ENCODE measurements at regions of chr3 and their contacts with region 1.

Region 1: GRCh38 chr3:170869645-170870593 is at the start of gene RPL22L1:
- DNase-seq: peak; percentile 86 to 97 (median 89)
- ATAC-seq: peak; percentile 93
- H3K4me3 ChIP-seq: peak within 1 kb of the TSS; percentile 84
- H3K4me3 Mint-ChIP-seq: peak within 1 kb of the TSS; percentile 93
- H3K27ac ChIP-seq: peak within 1 kb of the TSS; percentile 68 to 94
- H3K27ac Mint-ChIP-seq: peak within 1 kb of the TSS; percentile 93
- H3K4me1 ChIP-seq: peaks cover 25% of the 10 kb centered on the region
- H3K4me1 Mint-ChIP-seq: peaks cover 32% of the 10 kb centered on the region
- H3K27me3 ChIP-seq: no peaks in the 10 kb centered on the region
- H3K27me3 Mint-ChIP-seq: no peaks in the 10 kb centered on the region
- CTCF ChIP-seq: peak; percentile 12
- total RNA-seq, gene RPL22L1: 53.5 to 55.6 TPM

Region 2: DNA sequence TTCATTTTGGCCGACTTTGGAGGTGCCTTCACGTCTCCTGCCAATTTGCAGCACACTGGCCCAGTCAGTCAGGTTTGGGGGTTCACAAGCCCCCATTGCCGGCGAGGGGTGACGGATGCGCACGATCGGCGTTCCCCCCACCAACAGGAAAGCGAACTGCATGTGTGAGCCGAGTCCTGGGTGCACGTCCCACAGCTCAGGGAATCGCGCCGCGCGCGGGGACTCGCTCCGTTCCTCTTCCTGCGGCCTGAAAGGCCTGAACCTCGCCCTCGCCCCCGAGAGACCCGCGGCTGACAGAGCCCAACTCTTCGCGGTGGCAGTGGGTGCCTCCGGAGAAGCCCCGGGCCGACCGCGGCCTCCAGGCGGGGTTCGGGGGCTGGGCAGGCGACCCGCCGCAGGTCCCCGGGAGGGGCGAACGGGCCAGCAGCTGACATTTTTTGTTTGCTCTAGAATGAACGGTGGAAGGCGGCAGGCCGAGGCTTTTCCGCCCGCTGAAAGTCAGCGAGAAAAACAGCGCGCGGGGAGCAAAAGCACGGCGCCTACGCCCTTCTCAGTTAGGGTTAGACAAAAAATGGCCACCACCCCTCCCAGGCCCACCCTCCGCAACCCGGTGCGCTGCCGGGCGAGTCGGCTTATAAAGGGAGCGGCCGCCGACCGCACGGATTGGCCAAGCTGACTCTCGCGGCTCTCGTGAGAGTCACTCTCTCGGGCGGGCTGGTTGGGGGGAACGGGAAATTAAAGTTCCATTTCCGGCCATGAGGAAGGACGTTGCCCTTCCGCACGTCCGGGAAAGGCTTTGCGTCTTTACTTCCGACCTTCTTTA is 1105.3 kb before region 1 on chr3 and contains the start of gene TERC:
- CTCF ChIA-PET with region 1: no interaction called
- POLR2A ChIA-PET with region 1: interaction called, 6 read pairs
- intact Hi-C with region 1: loop called in 1 of 2 experiments (anchors 5 kb)
- DNase-seq: peak; percentile 82 to 98 (median 92)
- ATAC-seq: peak; percentile 82
- H3K4me3 ChIP-seq: peak within 1 kb of the TSS; percentile 93
- H3K4me3 Mint-ChIP-seq: peak within 1 kb of the TSS; percentile 98
- H3K27ac ChIP-seq: peak within 1 kb of the TSS; percentile 95 to 96
- H3K27ac Mint-ChIP-seq: peak within 1 kb of the TSS; percentile 97
- H3K4me1 ChIP-seq: peaks cover 27% of the 10 kb centered on the region
- H3K4me1 Mint-ChIP-seq: peaks cover 38% of the 10 kb centered on the region
- H3K27me3 ChIP-seq: no peaks in the 10 kb centered on the region
- H3K27me3 Mint-ChIP-seq: no peaks in the 10 kb centered on the region
- CTCF ChIP-seq: no peak
- total RNA-seq, gene TERC: 9.0 to 10.4 TPM

Region 3: DNA sequence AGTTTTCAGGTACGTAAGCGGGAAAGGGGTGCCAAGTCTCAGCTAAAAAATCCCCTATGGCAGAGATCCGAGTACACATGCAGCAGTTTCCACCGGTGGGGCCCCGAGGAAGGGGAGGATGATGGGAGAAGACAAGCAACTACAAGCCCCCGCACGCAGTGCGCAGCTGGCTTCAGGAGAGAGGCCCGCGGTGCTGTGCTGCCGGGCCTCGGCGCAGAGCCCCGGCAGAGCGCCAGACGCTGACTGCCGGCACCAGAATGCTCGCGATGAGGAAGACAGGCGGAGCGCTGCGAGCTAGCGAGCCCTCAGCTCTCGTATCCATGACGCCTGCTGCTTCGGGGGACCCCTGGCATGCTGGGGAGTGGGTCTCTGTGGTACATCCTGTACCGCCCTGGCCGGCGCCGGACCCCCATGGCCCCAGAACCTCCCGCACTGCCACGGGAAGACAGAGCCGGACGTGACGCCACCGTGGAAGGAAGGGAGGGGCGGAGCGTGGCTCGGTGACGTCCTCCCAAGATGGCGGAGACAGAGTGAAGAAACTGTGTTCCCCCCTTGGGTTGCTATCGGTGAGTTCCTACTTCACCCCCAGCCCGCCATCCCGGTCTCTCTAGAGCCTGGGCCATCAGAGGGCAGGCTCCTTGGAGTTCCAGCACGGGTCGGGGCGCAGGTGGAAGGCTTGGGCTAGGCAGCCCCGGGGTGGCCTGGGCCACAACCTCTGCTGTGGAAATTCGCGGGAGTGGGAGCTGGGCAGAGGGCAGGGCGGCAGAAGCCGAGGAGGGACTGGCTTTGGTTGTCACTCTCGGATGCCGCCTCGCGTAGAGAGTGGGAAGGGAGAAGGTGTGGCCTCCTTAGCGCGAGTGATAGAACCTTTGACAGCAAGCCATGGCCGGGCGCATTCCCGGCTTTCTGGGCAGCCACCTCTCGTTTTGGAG is 1096.8 kb before region 1 on chr3 and contains the start of gene MYNN:
- CTCF ChIA-PET with region 1: no interaction called
- POLR2A ChIA-PET with region 1: interaction called, 15 read pairs
- intact Hi-C with region 1: loop called in 1 of 2 experiments (anchors 5 kb)
- DNase-seq: peak; percentile 81 to 96 (median 89)
- ATAC-seq: peak; percentile 80
- H3K4me3 ChIP-seq: peak within 1 kb of the TSS; percentile 83
- H3K4me3 Mint-ChIP-seq: peak within 1 kb of the TSS; percentile 98
- H3K27ac ChIP-seq: peak within 1 kb of the TSS; percentile 98 to 100
- H3K27ac Mint-ChIP-seq: peak within 1 kb of the TSS; percentile 100
- H3K4me1 ChIP-seq: peaks cover 22% of the 10 kb centered on the region
- H3K4me1 Mint-ChIP-seq: peaks cover 69% of the 10 kb centered on the region
- H3K27me3 ChIP-seq: no peaks in the 10 kb centered on the region
- H3K27me3 Mint-ChIP-seq: peaks cover 12% of the 10 kb centered on the region
- CTCF ChIP-seq: no peak
- total RNA-seq, gene MYNN: 18.7 to 20.6 TPM

Region 4: GRCh38 chr3:170563712-170564423 is 306.1 kb before region 1 on chr3:
- CTCF ChIA-PET with region 1: no interaction called
- POLR2A ChIA-PET with region 1: no interaction called
- intact Hi-C with region 1: no loop called
- DNase-seq: no peak
- ATAC-seq: no peak
- H3K4me3 ChIP-seq: no peak overlapping the region
- H3K4me3 Mint-ChIP-seq: no peak overlapping the region
- H3K27ac ChIP-seq: no peak overlapping the region
- H3K27ac Mint-ChIP-seq: no peak overlapping the region
- H3K4me1 ChIP-seq: peaks cover 3% of the 10 kb centered on the region
- H3K4me1 Mint-ChIP-seq: peaks cover 12% of the 10 kb centered on the region
- H3K27me3 ChIP-seq: no peaks in the 10 kb centered on the region
- H3K27me3 Mint-ChIP-seq: peaks cover 9% of the 10 kb centered on the region
- CTCF ChIP-seq: no peak

Region 5: GRCh38 chr3:170908235-170909116 is 38.6 kb after region 1 on chr3 and contains the start of gene EIF5A2:
- CTCF ChIA-PET with region 1: interaction called, 9 read pairs
- POLR2A ChIA-PET with region 1: interaction called, 75 read pairs
- intact Hi-C with region 1: loop called (anchors 1 to 2 kb)
- DNase-seq: peak; percentile 92 to 98 (median 94)
- ATAC-seq: peak; percentile 94
- H3K4me3 ChIP-seq: peak within 1 kb of the TSS; percentile 66
- H3K4me3 Mint-ChIP-seq: peak within 1 kb of the TSS; percentile 99
- H3K27ac ChIP-seq: peak within 1 kb of the TSS; percentile 53 to 66
- H3K27ac Mint-ChIP-seq: peak within 1 kb of the TSS; percentile 86
- H3K4me1 ChIP-seq: peaks cover 10% of the 10 kb centered on the region
- H3K4me1 Mint-ChIP-seq: peaks cover 27% of the 10 kb centered on the region
- H3K27me3 ChIP-seq: no peaks in the 10 kb centered on the region
- H3K27me3 Mint-ChIP-seq: no peaks in the 10 kb centered on the region
- CTCF ChIP-seq: no peak
- total RNA-seq, gene EIF5A2: 10.6 to 13.7 TPM

Region 6: GRCh38 chr3:172749221-172749965 is 1879.5 kb after region 1 on chr3:
- CTCF ChIA-PET with region 1: no interaction called
- POLR2A ChIA-PET with region 1: no interaction called
- intact Hi-C with region 1: loop called in 1 of 2 experiments (anchors 10 kb)
- DNase-seq: peak in 1 of 14 experiments; percentile 7
- ATAC-seq: no peak
- H3K4me3 ChIP-seq: peak overlapping the region; percentile 85
- H3K4me3 Mint-ChIP-seq: peak overlapping the region; percentile 97
- H3K27ac ChIP-seq: no peak overlapping the region
- H3K27ac Mint-ChIP-seq: peak overlapping the region; percentile 13
- H3K4me1 ChIP-seq: peaks cover 10% of the 10 kb centered on the region
- H3K4me1 Mint-ChIP-seq: peaks cover 15% of the 10 kb centered on the region
- H3K27me3 ChIP-seq: no peaks in the 10 kb centered on the region
- H3K27me3 Mint-ChIP-seq: no peaks in the 10 kb centered on the region
- CTCF ChIP-seq: no peak

Measured in CD4-positive, alpha-beta T cell (primary cell).